Common myeloid progenitor, CD34-positive (primary cell): ENCODE measurements at regions of chr7 and their contacts with region 1.

Region 1: DNA sequence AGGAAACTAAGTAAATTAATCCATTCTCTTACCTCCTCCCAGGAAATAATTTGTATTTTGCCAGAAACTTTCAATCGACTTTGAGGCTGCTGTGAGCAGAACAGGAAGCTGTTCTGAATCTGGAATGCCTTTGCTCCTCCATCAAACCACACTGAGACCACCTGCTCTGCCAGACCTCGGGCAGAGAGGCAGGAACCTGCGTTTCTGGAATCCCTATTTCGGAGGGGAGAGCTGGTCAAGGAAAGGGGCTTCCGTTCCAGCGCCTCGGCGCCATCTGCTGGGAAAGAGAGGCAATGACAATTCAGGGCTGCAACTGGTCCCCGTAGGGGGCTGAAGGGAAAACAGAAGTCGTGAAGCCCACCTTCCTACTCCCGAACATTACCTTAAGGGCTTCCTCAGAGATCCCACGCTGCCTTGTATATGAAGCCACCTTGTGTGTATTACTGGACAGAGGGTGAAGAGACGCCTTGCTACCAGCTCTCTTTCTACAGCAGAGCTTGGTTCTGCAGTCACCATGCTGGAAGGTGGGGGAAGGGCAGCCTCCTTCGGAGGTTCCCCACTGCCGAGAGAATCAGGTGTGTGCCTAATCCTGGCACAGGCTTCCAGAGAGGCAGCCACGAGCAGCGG is 31.2 kb downstream of the ZNF467 start:
- DNase-seq: peak; percentile 40 to 48 (median 45)
- H3K4me3 ChIP-seq: peak overlapping the region in 6 of 7 experiments; percentile 56 to 78 (median 65)
- H3K27ac ChIP-seq: no peak overlapping the region
- H3K4me1 ChIP-seq: peaks cover 0 to 38% (median 21%) of the 10 kb centered on the region in 4 experiments
- H3K27me3 ChIP-seq: peaks cover 0 to 2% (median 0%) of the 10 kb centered on the region in 5 experiments

Region 2: DNA sequence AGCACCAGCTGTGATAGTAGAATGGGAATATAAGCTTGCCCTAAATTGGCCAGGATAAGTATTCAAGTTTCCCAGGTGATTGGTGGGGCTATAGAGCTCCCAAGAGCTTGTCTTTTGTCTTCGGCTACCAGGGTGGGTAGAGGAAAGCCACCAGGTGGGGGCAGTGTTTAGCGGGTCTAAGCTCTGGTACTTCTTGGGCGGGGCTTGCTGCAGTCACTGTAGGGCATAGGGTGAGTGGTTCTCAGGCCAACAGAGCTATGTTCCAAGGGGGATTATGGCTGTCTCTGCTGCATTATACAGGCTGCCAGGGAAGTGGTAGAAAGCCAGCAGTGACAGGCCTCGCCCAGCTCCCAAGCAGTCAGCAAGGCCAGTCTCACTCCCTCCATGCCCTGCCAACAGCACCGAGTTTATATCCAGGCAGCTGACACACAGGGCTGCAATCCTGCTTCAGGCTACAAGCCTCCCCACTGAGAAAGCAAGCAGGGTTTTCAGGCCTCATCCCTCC is 79.5 kb before region 1 on chr7:
- CTCF ChIA-PET with region 1: interaction called, 18 read pairs
- POLR2A ChIA-PET with region 1: no interaction called
- DNase-seq: peak; percentile 14 to 66 (median 51)
- H3K4me3 ChIP-seq: no peak overlapping the region
- H3K27ac ChIP-seq: no peak overlapping the region
- H3K4me1 ChIP-seq: no peaks in the 10 kb centered on the region
- H3K27me3 ChIP-seq: no peaks in the 10 kb centered on the region